PC-9 (cell line): ENCODE measurements at regions of chr19 and their contacts with region 1.

Region 1: GRCh38 chr19:2587001-2587719 is 111.2 kb downstream of the GADD45B start:
- DNase-seq: no peak
- H3K4me3 ChIP-seq: no peak overlapping the region
- H3K27ac ChIP-seq: no peak overlapping the region
- H3K4me1 ChIP-seq: no peaks in the 10 kb centered on the region
- H3K27me3 ChIP-seq: no peaks in the 10 kb centered on the region
- CTCF ChIP-seq: no peak

Region 2: DNA sequence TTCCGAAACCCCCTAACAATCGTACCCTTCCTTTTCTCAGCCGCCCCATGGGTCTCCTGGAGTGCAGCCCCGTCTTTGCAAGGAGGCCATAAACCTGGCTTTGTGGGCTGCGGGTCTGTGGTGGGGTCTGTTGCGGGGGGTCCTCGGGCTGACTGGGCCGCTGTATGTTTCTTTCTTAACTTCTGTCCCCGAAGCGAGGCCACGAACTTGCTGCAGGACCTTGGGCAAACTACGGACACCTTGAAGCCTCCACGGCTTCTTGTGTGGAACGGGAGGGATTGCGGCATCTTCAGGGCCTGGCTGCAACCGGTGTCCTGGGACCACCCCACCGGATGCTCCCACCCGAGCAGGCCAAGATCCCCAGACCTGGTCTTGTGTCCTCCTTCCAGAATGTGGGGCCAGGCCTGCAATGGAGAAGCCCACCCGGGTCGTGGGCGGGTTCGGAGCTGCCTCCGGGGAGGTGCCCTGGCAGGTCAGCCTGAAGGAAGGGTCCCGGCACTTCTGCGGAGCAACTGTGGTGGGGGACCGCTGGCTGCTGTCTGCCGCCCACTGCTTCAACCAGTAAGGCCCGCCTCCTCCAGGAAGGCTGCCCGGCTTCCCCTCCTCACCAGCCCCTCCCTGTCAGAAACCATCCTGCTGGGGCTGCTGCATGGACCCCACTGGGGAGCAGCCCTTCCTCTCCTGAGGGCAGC is 171.7 kb before region 1 on chr19:
- CTCF ChIA-PET with region 1: interaction called, 11 read pairs
- POLR2A ChIA-PET with region 1: no interaction called
- intact Hi-C with region 1: no loop called
- DNase-seq: no peak
- H3K4me3 ChIP-seq: no peak overlapping the region
- H3K27ac ChIP-seq: no peak overlapping the region
- H3K4me1 ChIP-seq: no peaks in the 10 kb centered on the region
- H3K27me3 ChIP-seq: no peaks in the 10 kb centered on the region
- CTCF ChIP-seq: no peak

Region 3: DNA sequence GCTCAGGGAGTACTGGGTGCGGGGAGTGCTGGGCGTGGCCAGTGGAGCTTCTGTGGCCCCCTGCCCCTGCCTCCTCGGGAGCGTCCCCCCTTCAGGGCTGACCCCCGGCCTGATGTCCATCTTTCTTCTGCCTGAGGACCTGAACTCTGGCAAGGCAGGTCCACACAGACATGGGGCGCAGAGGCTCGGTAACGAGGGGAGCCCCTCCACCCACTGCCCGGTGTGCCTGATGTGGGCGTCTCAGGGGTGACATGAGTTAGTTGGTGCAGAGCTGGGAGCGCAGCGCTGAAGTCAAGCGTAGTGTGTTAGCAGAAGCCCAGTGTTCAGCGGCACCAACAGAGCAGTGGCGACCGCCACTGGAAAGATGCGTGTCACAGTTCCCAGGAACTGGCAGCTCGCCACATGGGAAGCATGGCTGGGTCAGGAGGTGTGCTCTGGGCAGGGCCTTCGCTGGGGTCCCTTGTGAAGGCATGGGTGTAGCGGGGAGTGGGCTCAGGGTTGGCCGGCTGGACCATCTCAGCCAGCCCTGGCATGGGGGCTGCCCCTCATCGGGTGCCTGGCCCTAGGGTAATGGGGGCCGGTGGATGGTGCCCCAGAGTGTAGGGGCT is 209.6 kb after region 1 on chr19:
- CTCF ChIA-PET with region 1: interaction called, 13 read pairs
- POLR2A ChIA-PET with region 1: no interaction called
- intact Hi-C with region 1: no loop called
- DNase-seq: no peak
- H3K4me3 ChIP-seq: no peak overlapping the region
- H3K27ac ChIP-seq: no peak overlapping the region
- H3K4me1 ChIP-seq: no peaks in the 10 kb centered on the region
- H3K27me3 ChIP-seq: no peaks in the 10 kb centered on the region
- CTCF ChIP-seq: no peak